ENCODE measurements at regions of chr4 and their contacts with region 1.

Region 1: DNA sequence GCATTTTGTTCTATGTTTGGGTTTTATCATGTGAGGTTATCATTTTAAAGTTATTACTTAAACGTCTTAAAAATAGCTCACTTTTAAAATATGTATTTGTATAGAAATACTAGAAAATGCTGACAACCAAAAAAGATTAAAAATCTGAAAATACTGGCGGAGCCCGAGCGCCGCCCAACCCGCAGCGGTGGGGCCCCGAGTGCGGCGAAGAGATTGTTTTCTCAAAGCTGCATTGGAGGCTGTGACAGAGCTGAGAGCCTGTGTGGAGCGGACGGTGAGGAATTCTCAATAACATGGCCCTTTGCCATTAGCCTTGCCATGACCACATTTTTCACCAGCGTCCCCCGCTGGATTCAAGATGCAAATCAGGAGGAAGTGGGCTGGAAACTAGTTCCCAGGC is 255.4 kb downstream of the NKX6-1 start:
- DNase-seq: no peak
- H3K4me3 ChIP-seq: no peak overlapping the region
- H3K27ac ChIP-seq: no peak overlapping the region
- H3K4me1 ChIP-seq: no peaks in the 10 kb centered on the region
- H3K27me3 ChIP-seq: no peaks in the 10 kb centered on the region; a peak in 1 of 7 replicates
- CTCF ChIP-seq: no peak
- EP300 ChIP-seq: no peak
- POLR2A ChIP-seq: no peak
- RAD21 ChIP-seq: no peak

Region 2: GRCh38 chr4:84258905-84259830 is 15.5 kb after region 1 on chr4:
- CTCF ChIA-PET with region 1: interaction called, 10 read pairs
- POLR2A ChIA-PET with region 1: no interaction called
- DNase-seq: peak in 1 of 2 experiments; percentile 50
- H3K4me3 ChIP-seq: no peak overlapping the region
- H3K27ac ChIP-seq: no peak overlapping the region
- H3K4me1 ChIP-seq: no peaks in the 10 kb centered on the region; a peak in 1 of 7 replicates
- H3K27me3 ChIP-seq: no peaks in the 10 kb centered on the region
- CTCF ChIP-seq: peak in 2 of 3 experiments; percentile 79 to 83; a peak in 3 of 4 replicates
- EP300 ChIP-seq: no peak
- POLR2A ChIP-seq: no peak
- RAD21 ChIP-seq: peak; percentile 84 to 90

Measured in H1 (cell line).